Psoas muscle (tissue), 8 donors: ENCODE measurements at regions of chr19 and their contacts with region 1.

Region 1: DNA sequence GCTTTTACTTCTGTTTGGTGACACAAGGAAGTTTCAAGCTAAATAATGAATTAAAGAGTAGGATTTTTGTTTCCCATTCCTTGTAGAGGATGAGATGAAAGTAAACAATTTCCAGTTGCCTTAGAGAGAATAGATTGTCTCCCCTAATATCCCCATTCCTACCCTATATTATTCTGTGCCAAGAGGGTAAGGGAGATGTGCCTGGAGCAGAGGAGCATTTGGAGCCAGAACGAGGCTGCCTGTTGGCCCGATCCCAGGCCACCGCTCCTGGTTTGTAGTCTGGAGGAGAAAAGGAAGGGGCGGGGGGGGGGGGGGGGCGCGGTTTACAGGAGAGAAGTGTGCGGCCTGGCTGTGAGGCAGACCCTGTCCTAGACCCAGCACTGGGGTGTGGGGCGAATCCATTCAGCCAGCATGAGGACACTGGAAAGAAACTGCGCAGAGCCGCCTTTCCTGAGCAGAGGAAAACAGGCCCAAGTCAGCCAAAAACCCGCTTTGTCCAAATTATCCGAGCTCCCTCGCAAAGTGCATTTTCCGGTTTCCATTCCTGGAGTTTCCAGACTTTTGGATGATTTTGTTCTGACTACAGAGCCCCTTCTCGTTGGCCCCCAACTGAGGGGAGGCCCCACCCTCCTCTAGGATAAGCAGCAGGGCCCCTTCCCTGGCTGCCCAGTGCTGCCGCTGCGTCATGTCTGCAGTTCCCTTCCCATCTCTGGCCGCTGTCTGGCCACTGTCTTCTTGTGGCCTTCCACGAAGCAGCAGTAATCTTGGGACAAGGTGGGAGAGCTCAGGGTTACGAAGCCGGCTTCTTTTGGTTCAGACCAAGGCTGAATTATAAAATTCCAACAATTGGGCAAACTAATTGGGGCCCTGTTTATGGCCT is 23.0 kb downstream of the NFIX start:
- DNase-seq: peak; percentile 78 to 84
- ATAC-seq: peak in 1 of 4 donors; percentile 21
- H3K4me3 ChIP-seq: peak overlapping the region; percentile 57
- H3K27ac ChIP-seq: peak overlapping the region; percentile 99
- H3K4me1 ChIP-seq: peaks cover 73% of the 10 kb centered on the region
- H3K27me3 ChIP-seq: no peaks in the 10 kb centered on the region
- CTCF ChIP-seq: no peak

Region 2: GRCh38 chr19:12994701-12995595 is 23.3 kb before region 1 on chr19 and contains the start of gene NFIX:
- intact Hi-C with region 1: loop called (anchors 2 kb)
- DNase-seq: peak; percentile 79 to 89
- ATAC-seq: peak; percentile 34 to 43 (median 38)
- H3K4me3 ChIP-seq: peak within 1 kb of the TSS; percentile 95
- H3K27ac ChIP-seq: peak within 1 kb of the TSS; percentile 99
- H3K4me1 ChIP-seq: peaks cover 28% of the 10 kb centered on the region
- H3K27me3 ChIP-seq: no peaks in the 10 kb centered on the region
- CTCF ChIP-seq: no peak
- total RNA-seq, gene NFIX: 220 to 347 (median 268) TPM